Right ventricle myocardium inferior (tissue), 1 donor: ENCODE measurements at regions of chr19 and their contacts with region 1.

Region 1: GRCh38 chr19:47273313-47273977 is 1.2 kb upstream of the INAFM1 start:
- DNase-seq: peak; percentile 95
- ATAC-seq: peak; percentile 82

Region 2: DNA sequence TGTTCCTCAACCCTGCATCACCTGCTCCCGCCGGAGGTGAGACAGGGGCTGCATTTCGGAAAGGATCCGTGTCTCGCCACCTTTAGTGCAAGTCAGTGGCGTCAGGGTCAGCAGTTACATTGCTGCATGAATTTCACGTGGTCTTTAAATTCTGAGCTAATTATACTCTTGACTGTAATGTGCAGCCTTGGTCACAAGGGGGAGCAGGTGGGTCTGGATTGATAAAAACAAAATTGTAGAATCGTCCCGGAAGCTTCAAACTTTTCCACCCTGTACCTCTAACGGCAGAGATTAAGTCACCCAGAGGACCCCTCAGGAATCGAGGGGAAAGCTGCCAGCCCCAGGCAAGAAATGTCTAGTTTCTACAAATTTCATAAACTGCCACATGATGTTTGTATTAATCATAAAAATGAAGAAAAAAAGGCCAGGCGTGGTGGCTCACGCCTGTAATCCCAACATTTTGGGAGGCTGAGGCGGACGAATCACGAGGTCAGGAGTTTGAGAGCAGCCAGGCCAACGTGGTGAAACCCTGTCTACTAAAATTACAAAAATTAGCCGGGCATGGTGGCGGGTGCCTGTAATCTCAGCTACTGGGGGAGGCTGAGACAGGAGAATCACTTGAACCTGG is 62.6 kb before region 1 on chr19:
- intact Hi-C with region 1: no loop called
- DNase-seq: peak; percentile 73
- ATAC-seq: peak; percentile 68

Region 3: GRCh38 chr19:47256688-47257443 is 16.6 kb before region 1 on chr19:
- intact Hi-C with region 1: loop called (anchors 1 kb)
- DNase-seq: peak; percentile 100
- ATAC-seq: peak; percentile 87

Region 4: GRCh38 chr19:47305309-47305751 is 31.9 kb after region 1 on chr19:
- intact Hi-C with region 1: no loop called
- DNase-seq: peak; percentile 89
- ATAC-seq: peak; percentile 60

Region 5: DNA sequence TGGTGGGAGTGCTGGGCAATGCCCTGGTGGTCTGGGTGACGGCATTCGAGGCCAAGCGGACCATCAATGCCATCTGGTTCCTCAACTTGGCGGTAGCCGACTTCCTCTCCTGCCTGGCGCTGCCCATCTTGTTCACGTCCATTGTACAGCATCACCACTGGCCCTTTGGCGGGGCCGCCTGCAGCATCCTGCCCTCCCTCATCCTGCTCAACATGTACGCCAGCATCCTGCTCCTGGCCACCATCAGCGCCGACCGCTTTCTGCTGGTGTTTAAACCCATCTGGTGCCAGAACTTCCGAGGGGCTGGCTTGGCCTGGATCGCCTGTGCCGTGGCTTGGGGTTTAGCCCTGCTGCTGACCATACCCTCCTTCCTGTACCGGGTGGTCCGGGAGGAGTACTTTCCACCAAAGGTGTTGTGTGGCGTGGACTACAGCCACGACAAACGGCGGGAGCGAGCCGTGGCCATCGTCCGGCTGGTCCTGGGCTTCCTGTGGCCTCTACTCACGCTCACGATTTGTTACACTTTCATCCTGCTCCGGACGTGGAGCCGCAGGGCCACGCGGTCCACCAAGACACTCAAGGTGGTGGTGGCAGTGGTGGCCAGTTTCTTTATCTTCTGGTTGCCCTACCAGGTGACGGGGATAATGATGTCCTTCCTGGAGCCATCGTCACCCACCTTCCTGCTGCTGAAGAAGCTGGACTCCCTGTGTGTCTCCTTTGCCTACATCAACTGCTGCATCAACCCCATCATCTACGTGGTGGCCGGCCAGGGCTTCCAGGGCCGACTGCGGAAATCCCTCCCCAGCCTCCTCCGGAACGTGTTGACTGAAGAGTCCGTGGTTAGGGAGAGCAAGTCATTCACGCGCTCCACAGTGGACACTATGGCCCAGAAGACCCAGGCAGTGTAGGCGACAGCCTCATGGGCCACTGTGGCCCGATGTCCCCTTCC is 46.8 kb after region 1 on chr19:
- intact Hi-C with region 1: no loop called
- DNase-seq: no peak
- ATAC-seq: no peak

Region 6: DNA sequence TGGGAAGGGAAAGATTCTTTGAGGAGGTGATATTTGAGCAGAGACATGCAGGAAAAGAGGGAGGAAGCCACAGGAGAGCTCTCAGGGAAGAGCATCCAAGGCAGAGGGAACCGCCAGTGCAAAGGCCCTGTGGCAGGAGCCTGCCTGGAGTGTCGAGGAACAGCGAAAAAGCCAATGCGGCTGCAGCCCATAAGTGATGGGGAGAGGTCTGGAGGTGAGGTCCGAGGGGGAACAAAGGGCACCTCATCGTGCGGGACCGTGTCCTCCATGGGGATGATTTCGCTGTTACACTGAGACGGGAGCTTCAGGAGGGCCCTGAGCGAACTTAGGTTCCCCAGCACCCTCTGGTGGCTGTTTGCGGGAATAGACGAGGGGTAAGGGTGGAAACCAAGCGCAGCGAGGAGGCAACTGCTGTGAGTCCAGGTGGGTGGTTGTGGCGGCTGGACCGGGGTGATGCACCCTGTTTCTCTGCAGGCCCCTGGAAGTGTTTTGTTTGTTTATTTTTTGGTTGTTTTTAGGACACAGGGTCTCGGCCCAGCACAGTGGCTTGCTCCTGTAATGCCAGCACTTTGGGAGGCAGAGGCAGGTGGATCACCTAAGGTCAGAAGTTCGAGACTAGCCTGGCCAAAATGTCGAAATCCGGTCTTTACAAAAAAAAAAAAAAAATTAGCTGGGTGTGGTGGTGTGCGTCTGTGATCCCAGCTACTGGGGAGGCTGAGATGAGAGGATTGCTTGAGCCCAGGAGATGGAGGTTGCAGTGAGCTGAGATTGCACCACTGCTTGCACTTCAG is 433.9 kb after region 1 on chr19:
- intact Hi-C with region 1: loop called (anchors 10 kb)
- DNase-seq: no peak
- ATAC-seq: peak; percentile 76